Psoas muscle (tissue), 8 donors: ENCODE measurements at regions of chr3 and their contacts with region 1.

Region 1: DNA sequence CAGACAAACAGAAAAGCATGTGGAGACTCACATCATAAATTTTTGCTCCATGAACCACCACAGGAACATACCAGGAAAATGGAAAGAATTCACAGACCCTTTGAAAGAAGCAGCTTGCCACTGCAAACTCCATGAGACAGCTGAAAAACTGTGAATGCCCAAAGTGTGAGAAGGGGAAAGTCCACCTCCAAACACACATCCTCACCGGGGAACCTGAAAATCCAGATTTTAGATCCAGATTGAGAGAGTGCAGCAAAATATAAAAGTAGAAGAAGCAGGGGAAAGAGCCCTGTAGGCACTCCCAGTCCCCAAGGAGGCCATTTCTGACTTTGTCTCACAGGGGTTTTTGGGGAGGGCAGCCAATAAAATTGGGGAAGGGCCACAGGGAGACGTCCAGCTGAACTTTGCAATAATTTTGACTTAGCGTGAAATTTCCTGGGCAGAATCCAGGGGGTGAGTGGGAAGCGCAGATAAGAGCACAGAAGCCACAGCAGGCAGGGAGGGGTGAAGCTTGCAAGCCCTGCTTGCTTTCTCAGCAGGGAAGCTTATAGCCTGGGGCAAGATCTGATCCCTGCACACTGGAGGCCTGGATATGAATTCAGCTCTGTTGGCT is 183.4 kb upstream of the UBE2E2 start:
- DNase-seq: no peak
- ATAC-seq: no peak
- H3K4me3 ChIP-seq: no peak overlapping the region
- H3K27ac ChIP-seq: no peak overlapping the region
- H3K4me1 ChIP-seq: peaks cover 9% of the 10 kb centered on the region
- H3K27me3 ChIP-seq: no peaks in the 10 kb centered on the region
- CTCF ChIP-seq: no peak

Region 2: DNA sequence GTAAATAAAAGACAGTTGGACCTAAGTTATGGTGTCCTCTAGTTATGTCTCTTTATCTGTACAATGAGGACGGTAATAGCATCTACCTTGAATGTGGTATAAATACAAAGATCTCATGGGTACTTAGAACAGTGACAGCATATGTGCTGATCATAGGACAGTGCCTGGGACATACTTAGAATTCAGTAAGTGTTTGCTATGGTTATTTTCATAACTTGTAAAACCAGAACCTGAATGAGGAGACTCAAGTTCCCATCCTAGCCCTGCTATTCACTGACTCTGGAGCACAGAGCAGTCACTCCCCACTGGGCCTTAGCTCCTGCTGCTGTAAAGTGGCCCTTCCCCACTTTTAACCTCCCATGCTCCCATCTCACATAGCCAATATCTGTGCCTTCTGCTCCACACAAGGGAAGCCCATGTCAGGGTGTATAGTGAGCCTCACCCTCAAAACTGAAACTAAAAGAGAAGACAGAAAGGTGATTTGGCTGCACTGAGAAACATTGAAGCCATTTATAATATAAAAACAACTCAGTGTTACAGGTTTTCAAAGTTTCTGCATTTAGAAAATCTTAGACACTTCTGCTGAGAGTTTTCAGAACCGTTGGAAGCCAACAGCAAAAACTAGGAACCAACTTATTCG is 42.0 kb before region 1 on chr3:
- intact Hi-C with region 1: no loop called
- DNase-seq: no peak
- ATAC-seq: no peak
- H3K4me3 ChIP-seq: no peak overlapping the region
- H3K27ac ChIP-seq: no peak overlapping the region
- H3K4me1 ChIP-seq: peaks cover 7% of the 10 kb centered on the region
- H3K27me3 ChIP-seq: no peaks in the 10 kb centered on the region
- CTCF ChIP-seq: no peak

Region 3: GRCh38 chr3:23095017-23095416 is 75.2 kb after region 1 on chr3:
- intact Hi-C with region 1: no loop called
- DNase-seq: no peak
- ATAC-seq: peak; percentile 41 to 94 (median 56)
- H3K4me3 ChIP-seq: no peak overlapping the region
- H3K27ac ChIP-seq: no peak overlapping the region
- H3K4me1 ChIP-seq: no peaks in the 10 kb centered on the region
- H3K27me3 ChIP-seq: no peaks in the 10 kb centered on the region
- CTCF ChIP-seq: no peak

Region 4: GRCh38 chr3:23474580-23475357 is 455.0 kb after region 1 on chr3:
- intact Hi-C with region 1: loop called in 1 of 2 experiments (anchors 5 kb)
- DNase-seq: no peak
- ATAC-seq: no peak
- H3K4me3 ChIP-seq: no peak overlapping the region
- H3K27ac ChIP-seq: no peak overlapping the region
- H3K4me1 ChIP-seq: peaks cover 5% of the 10 kb centered on the region
- H3K27me3 ChIP-seq: no peaks in the 10 kb centered on the region
- CTCF ChIP-seq: no peak